Activated naive CD4-positive, alpha-beta T cell treated with anti-CD3 and anti-CD28 coated beads for 36 hours (primary cell): ENCODE measurements at regions of chrX and their contacts with region 1.

Region 1: GRCh38 chrX:15854712-15855567 is at the start of gene AP1S2:
- DNase-seq: peak; percentile 91
- H3K4me3 Mint-ChIP-seq: peak within 1 kb of the TSS; percentile 88
- H3K27ac Mint-ChIP-seq: peak within 1 kb of the TSS; percentile 95
- H3K4me1 Mint-ChIP-seq: peaks cover 20% of the 10 kb centered on the region
- H3K27me3 Mint-ChIP-seq: no peaks in the 10 kb centered on the region
- total RNA-seq, gene AP1S2: 17.4 to 18.0 TPM

Region 2: DNA sequence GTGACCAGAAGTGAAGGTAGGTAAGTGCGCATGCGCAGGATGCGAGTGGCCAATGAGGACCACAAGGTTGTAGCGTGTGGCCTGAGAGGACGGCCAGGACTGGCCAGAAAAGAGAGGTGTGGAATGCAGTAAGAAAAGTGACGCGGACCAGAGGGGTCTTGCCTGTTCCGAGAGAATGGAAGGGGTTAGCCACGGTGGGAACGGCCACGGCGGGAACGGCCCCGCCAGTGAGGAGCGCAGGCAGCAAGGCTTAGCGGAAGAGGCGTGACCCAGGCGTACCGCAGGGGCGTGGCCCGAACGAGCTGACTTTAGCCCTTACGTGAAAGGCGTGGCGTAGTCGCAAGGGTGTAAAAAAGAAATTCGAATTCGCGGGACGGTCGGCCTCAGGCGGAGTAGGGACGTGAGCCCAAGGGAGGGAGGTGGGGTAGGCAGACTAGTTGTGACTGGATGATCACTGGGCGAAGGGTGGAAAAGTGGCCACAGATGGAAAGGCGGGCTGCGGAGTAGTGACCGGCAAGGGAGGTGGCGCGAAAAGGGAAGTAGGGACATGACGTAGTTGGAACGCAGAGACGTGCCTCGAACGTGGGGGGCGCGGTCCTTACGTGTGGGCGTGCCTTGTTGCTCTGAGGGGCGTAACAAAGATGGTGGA is 180.0 kb before region 1 on chrX:
- CTCF ChIA-PET with region 1: no interaction called
- intact Hi-C with region 1: loop called (anchors 1 kb)
- DNase-seq: peak; percentile 85
- H3K4me3 Mint-ChIP-seq: no peak overlapping the region
- H3K27ac Mint-ChIP-seq: no peak overlapping the region
- H3K4me1 Mint-ChIP-seq: peaks cover 21% of the 10 kb centered on the region
- H3K27me3 Mint-ChIP-seq: no peaks in the 10 kb centered on the region

Region 3: GRCh38 chrX:15761564-15762191 is 93.3 kb before region 1 on chrX:
- CTCF ChIA-PET with region 1: no interaction called
- intact Hi-C with region 1: loop called (anchors 1 kb)
- DNase-seq: peak; percentile 55
- H3K4me3 Mint-ChIP-seq: no peak overlapping the region
- H3K27ac Mint-ChIP-seq: peak overlapping the region; percentile 46
- H3K4me1 Mint-ChIP-seq: peaks cover 35% of the 10 kb centered on the region
- H3K27me3 Mint-ChIP-seq: no peaks in the 10 kb centered on the region

Region 4: DNA sequence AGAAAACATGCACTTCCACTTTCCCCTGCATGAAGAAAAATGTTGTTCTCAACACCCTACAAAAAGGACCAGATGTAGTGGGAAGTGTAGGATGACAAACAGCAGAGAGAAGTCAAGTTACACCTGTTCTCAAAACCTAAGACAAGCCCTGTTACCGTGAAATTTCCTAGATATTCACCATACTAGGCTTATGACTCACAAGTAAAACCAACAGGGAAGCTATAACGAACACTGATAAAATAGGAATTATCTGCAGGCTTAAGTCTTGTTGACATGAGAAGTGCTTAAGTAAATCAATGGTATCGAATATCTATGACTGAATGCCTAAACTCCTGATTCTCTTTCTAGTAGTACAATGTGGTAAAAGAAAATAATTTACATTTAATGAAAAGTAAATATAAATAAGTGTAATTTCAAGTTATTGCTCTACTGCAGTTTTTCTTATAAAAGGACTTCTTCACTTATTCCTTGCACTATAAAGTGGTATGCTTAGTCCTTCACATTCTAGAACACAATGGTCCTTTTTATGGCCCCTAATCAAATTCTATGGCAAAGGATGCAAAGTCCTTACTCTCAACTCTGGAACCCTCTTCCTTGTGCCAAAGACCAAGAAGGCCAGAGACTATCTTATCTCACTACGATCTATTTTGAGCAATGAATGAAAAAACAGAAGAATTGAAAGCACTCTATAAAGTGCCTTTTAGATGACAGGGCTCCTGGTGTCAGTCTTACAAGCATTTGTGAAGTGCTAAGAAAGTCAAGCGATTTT is 19.9 kb before region 1 on chrX:
- CTCF ChIA-PET with region 1: no interaction called
- intact Hi-C with region 1: loop called (anchors 2 kb)
- DNase-seq: no peak
- H3K4me3 Mint-ChIP-seq: no peak overlapping the region
- H3K27ac Mint-ChIP-seq: no peak overlapping the region
- H3K4me1 Mint-ChIP-seq: peaks cover 3% of the 10 kb centered on the region
- H3K27me3 Mint-ChIP-seq: no peaks in the 10 kb centered on the region

Region 5: GRCh38 chrX:16033331-16033730 is 178.4 kb after region 1 on chrX:
- CTCF ChIA-PET with region 1: no interaction called
- intact Hi-C with region 1: loop called (anchors 10 kb)
- DNase-seq: no peak
- H3K4me3 Mint-ChIP-seq: no peak overlapping the region
- H3K27ac Mint-ChIP-seq: no peak overlapping the region
- H3K4me1 Mint-ChIP-seq: no peaks in the 10 kb centered on the region
- H3K27me3 Mint-ChIP-seq: peaks cover 2% of the 10 kb centered on the region

Region 6: GRCh38 chrX:16719334-16720084 is 864.6 kb after region 1 on chrX and contains the start of gene SYAP1:
- CTCF ChIA-PET with region 1: no interaction called
- intact Hi-C with region 1: loop called (anchors 1 kb)
- DNase-seq: peak; percentile 93
- H3K4me3 Mint-ChIP-seq: peak within 1 kb of the TSS; percentile 89
- H3K27ac Mint-ChIP-seq: peak within 1 kb of the TSS; percentile 92
- H3K4me1 Mint-ChIP-seq: peaks cover 33% of the 10 kb centered on the region
- H3K27me3 Mint-ChIP-seq: no peaks in the 10 kb centered on the region
- total RNA-seq, gene SYAP1: 17.1 to 18.9 TPM